Motor neuron (in vitro differentiated cells): ENCODE measurements at regions of chr12 and their contacts with region 1.

Region 1: GRCh38 chr12:13534645-13535398 is 338.3 kb downstream of the EMP1 start:
- ATAC-seq: peak in 7 of 8 experiments; percentile 34 to 87 (median 58)
- H3K4me3 ChIP-seq: no peak overlapping the region
- H3K27ac ChIP-seq: no peak overlapping the region
- H3K4me1 ChIP-seq: peaks cover 0 to 2% of the 10 kb centered on the region in 2 donors

Region 2: DNA sequence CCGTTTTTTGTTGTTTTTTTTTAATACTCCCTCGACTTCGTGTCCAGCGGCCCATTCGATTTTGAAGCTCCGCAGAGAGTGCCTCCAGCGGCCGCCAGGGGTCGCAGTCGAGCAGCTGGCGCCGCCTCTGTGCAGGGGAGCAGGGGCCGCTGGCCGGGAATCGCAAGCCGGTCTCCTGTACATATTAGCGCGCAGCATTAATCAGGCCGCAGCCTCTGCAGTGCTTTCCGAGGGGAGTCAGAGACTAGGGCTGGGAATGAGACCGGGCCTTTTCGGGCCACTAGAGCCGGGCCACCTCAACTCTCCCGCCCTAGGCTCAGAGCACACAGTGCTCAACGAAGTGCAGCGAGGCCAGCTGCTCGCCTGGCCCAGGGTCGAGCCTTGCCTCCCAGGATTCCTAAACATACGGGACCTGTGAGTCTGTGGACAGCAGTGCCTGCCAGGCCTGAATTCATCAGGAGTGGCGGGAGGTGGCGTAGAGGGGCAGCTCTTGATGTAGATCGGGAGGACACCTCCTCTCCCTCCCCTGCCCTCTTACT is 256.5 kb before region 1 on chr12:
- in situ Hi-C with region 1: loop called in 1 of 9 experiments (anchors 25 kb)
- ATAC-seq: peak; percentile 89 to 98 (median 95)
- H3K4me3 ChIP-seq: no peak overlapping the region
- H3K27ac ChIP-seq: peak overlapping the region; percentile 21 to 31
- H3K4me1 ChIP-seq: peaks cover 37 to 38% of the 10 kb centered on the region in 2 donors

Region 3: GRCh38 chr12:13383379-13383778 is 151.4 kb before region 1 on chr12:
- in situ Hi-C with region 1: loop called in 1 of 9 experiments (anchors 10 kb)
- ATAC-seq: peak in 2 of 8 experiments; percentile 25 to 60
- H3K4me3 ChIP-seq: no peak overlapping the region
- H3K27ac ChIP-seq: no peak overlapping the region
- H3K4me1 ChIP-seq: peaks cover 8 to 10% of the 10 kb centered on the region in 2 donors